ENCODE measurements at regions of chr5 and their contacts with region 1.

Region 1: DNA sequence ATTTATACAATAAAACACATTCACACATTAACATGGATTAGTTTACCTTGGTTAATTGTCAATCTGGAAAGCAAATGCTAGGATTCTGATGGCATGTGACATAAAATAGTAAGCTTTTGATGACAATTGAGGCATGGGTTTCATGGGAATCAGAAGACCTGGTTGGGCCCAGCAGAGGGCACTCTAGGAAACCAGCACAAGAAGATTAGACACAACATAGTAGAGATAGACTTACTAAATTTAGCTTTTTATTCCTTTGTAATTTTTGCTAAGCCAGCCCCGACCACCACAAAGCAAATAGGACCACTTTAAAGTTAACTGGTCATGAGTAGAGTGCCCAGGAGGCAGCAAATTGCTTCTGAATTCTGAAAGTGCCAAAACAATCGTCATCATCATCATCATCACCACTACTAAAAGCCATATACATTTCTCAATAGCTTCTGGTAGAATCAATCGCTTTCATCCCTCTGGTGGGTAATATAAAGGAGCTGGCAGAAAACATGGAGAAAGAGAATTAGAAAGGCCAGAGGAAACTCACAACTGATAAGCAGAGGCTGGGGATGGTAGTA is 163.2 kb downstream of the ARRDC3 start:
- DNase-seq: peak; percentile 64 to 68
- H3K4me3 ChIP-seq: no peak overlapping the region
- H3K4me3 Mint-ChIP-seq: no peak overlapping the region
- H3K27ac Mint-ChIP-seq: peak overlapping the region; percentile 75
- H3K4me1 ChIP-seq: peaks cover 43% of the 10 kb centered on the region
- H3K4me1 Mint-ChIP-seq: peaks cover 41% of the 10 kb centered on the region
- H3K27me3 ChIP-seq: no peaks in the 10 kb centered on the region
- H3K27me3 Mint-ChIP-seq: no peaks in the 10 kb centered on the region
- CTCF ChIP-seq: peak; percentile 60 to 62

Region 2: DNA sequence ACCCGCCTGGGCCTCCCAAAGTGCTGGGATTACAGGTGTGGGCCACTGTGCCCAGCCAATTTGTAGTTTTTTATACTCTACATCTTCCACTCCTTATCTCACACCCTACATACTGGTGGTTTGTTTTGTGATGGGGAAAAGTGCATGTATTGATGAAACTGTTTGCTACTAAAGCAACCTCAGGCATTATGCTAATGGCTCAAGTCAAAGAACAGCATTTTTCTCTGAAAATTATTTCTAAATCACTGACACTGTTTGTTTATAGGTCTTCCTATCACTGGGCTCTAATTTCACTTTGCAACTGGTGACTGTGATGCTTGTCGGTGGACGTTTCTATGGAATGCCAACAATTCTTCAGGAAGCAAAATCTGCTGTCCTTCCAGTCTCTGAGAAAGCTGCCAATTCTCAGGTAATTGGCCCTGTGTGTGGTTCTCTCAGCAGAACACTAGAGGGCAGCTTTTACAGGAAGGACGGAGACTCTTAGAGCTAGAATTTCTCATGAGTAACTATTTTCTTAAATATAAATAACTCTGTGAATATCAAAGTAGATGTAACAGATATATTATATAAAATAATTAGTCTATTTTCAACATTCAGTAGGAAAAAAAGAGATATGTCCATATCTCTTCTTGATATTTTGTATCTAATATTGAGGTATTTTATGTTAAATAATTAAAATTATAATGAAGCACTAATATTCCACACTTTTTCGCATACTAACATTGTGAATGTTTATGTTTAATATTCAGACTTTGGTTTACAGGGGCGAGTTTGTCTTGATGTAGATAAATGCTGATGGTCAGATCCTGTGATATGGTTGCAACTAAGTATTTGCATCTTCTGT is 417.2 kb before region 1 on chr5:
- CTCF ChIA-PET with region 1: no interaction called
- POLR2A ChIA-PET with region 1: no interaction called
- intact Hi-C with region 1: no loop called
- DNase-seq: peak; percentile 53 to 54
- H3K4me3 ChIP-seq: no peak overlapping the region
- H3K4me3 Mint-ChIP-seq: no peak overlapping the region
- H3K27ac Mint-ChIP-seq: no peak overlapping the region
- H3K4me1 ChIP-seq: no peaks in the 10 kb centered on the region
- H3K4me1 Mint-ChIP-seq: no peaks in the 10 kb centered on the region
- H3K27me3 ChIP-seq: no peaks in the 10 kb centered on the region
- H3K27me3 Mint-ChIP-seq: no peaks in the 10 kb centered on the region
- CTCF ChIP-seq: peak; percentile 75 to 86

Region 3: GRCh38 chr5:90949469-90950358 is 270.2 kb before region 1 on chr5:
- CTCF ChIA-PET with region 1: no interaction called
- POLR2A ChIA-PET with region 1: no interaction called
- intact Hi-C with region 1: loop called (anchors 1 kb)
- DNase-seq: peak in 1 of 2 experiments; percentile 56
- H3K4me3 ChIP-seq: no peak overlapping the region
- H3K4me3 Mint-ChIP-seq: no peak overlapping the region
- H3K27ac Mint-ChIP-seq: peak overlapping the region; percentile 42
- H3K4me1 ChIP-seq: peaks cover 42% of the 10 kb centered on the region
- H3K4me1 Mint-ChIP-seq: peaks cover 32% of the 10 kb centered on the region
- H3K27me3 ChIP-seq: no peaks in the 10 kb centered on the region
- H3K27me3 Mint-ChIP-seq: no peaks in the 10 kb centered on the region
- CTCF ChIP-seq: no peak

Region 4: GRCh38 chr5:91162534-91163381 is 57.1 kb before region 1 on chr5:
- CTCF ChIA-PET with region 1: no interaction called
- POLR2A ChIA-PET with region 1: no interaction called
- intact Hi-C with region 1: loop called (anchors 1 kb)
- DNase-seq: peak; percentile 80 to 85
- H3K4me3 ChIP-seq: no peak overlapping the region
- H3K4me3 Mint-ChIP-seq: peak overlapping the region; percentile 20
- H3K27ac Mint-ChIP-seq: peak overlapping the region; percentile 62
- H3K4me1 ChIP-seq: peaks cover 33% of the 10 kb centered on the region
- H3K4me1 Mint-ChIP-seq: peaks cover 20% of the 10 kb centered on the region
- H3K27me3 ChIP-seq: no peaks in the 10 kb centered on the region
- H3K27me3 Mint-ChIP-seq: no peaks in the 10 kb centered on the region
- CTCF ChIP-seq: no peak

Region 5: DNA sequence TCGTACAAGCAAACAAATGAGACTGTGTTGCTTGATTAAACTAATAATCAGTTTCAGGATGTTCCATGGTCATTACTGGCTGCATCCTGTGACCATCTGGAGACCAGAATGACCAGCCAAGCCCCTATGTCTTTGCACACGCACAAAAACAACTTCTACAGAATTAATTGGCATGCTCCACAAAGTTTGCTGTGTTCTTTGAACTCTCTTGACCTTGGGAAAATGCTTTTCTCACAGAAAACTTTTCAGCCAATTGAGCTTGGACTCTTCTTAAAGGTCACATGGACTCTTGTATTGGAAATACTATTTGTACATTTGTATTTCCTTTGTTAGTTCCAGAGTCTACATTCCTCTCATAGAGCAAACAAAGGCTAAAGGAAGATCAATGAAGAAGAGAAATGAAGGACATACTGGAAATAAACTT is 15.4 kb after region 1 on chr5:
- CTCF ChIA-PET with region 1: interaction called, 5 read pairs
- POLR2A ChIA-PET with region 1: no interaction called
- intact Hi-C with region 1: loop called (anchors 1 kb)
- DNase-seq: peak in 1 of 2 experiments; percentile 18
- H3K4me3 ChIP-seq: no peak overlapping the region
- H3K4me3 Mint-ChIP-seq: no peak overlapping the region
- H3K27ac Mint-ChIP-seq: peak overlapping the region; percentile 42
- H3K4me1 ChIP-seq: peaks cover 20% of the 10 kb centered on the region
- H3K4me1 Mint-ChIP-seq: peaks cover 25% of the 10 kb centered on the region
- H3K27me3 ChIP-seq: no peaks in the 10 kb centered on the region
- H3K27me3 Mint-ChIP-seq: no peaks in the 10 kb centered on the region
- CTCF ChIP-seq: no peak

Region 6: DNA sequence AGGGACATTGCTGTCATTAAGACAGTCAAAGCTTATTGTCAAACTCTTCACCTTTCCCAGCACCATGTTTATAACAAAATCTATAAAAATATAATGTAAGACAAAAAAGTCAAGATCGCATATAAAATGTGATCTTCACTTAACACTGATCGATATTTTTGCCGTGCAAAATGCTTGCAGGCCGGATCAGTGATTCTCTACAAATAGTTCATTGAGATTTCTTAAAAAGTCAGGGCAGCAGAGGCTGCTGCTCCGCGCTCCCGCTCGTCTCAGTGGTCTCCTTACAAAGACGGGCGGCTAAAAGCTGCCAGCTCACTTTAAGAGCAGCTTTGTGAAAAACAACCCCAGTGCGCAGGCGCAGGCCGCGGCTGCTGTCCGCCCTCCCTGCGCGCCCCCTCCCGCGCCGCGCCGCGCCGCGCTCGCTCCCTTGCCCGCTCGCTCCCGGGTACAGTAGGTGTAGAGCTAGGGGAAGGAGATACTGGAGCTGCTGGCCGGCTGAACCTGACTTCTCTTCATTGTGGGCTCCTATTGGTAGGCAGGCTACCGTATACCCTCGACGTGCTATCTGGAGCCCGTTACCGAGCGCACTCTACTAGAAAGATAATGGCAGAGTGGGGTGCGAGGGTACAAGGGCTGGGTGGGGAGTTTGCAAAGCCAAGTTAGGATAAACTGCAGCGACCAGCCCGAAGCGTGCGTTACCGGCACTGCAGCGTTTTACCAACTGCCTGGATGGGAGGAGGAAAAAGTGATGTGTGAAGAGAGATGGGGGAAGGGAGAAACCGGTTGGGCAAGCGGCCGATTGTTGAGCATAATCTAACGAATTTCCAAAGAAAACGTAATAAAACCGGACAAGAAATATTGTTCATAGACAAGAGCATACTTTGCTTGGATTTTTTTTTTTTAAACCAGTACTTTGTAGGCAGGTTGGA is 163.4 kb after region 1 on chr5 and contains the start of gene ARRDC3:
- CTCF ChIA-PET with region 1: interaction called, 71 read pairs
- POLR2A ChIA-PET with region 1: interaction called, 40 read pairs
- intact Hi-C with region 1: loop called (anchors 1 kb)
- DNase-seq: peak; percentile 97 to 98
- H3K4me3 ChIP-seq: peak within 1 kb of the TSS; percentile 65
- H3K4me3 Mint-ChIP-seq: peak within 1 kb of the TSS; percentile 88
- H3K27ac Mint-ChIP-seq: peak within 1 kb of the TSS; percentile 94
- H3K4me1 ChIP-seq: peaks cover 11% of the 10 kb centered on the region
- H3K4me1 Mint-ChIP-seq: no peaks in the 10 kb centered on the region
- H3K27me3 ChIP-seq: no peaks in the 10 kb centered on the region
- H3K27me3 Mint-ChIP-seq: no peaks in the 10 kb centered on the region
- CTCF ChIP-seq: peak in 1 of 2 experiments; percentile 12
- total RNA-seq, gene ARRDC3: 34.5 and 38.7 TPM in 2 replicates